ENCODE measurements at regions of chr1 and their contacts with region 1.

Region 1: DNA sequence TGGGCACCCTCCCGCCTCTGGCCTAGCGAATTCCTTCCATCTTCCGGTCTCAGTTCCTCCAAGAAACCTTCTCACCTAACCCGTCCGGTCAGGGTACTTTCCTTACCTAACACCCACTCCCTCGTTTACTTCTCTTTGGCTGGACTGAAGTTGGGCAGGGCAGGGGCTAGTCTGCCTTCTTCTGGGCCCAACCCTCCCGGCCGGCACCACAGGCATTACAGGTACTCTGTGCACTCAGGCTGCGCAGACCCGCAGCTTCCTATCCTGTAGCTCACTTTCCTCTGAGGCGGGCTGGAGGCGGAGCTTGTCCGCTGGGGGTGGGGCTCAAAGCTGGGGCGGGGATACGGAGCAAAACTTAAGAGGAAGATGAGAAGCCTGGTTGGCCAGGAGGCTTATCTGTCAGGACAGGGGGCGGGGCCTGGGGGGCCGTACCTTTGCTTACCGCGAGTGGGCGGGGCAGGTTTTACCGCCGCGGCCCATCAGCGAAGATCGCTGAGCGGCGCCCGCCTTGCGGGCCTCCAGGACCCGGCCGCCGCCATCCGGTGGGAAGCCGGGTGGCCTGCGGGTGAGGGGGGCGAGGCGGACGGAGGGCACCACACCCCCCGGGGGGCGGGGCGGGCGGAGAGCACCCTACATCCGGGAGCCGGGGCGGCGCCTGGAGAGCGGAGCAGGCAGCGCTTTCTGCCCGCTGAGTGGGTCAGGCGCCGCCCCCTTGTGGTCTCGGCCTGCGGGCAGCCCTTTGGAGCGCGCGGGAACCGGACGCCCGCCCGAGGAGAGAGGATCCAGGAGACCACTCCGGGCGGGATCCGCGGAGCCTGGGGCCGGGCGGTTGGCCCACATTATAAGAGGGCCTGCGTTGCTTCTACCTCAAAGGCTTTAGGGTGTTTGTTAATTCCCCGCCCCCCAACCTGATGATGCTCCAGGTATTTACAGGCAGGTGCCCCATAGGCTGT is 31.9 kb downstream of the ZNF648 start:
- DNase-seq: peak; percentile 96 to 99 (median 98)
- ATAC-seq: peak; percentile 93
- H3K4me3 ChIP-seq: peak overlapping the region; percentile 76 to 77
- H3K4me3 Mint-ChIP-seq: peak overlapping the region; percentile 93
- H3K27ac ChIP-seq: peak overlapping the region; percentile 68 to 84
- H3K27ac Mint-ChIP-seq: peak overlapping the region; percentile 98
- H3K4me1 ChIP-seq: peaks cover 16% of the 10 kb centered on the region
- H3K4me1 Mint-ChIP-seq: peaks cover 18% of the 10 kb centered on the region
- H3K27me3 ChIP-seq: no peaks in the 10 kb centered on the region
- H3K27me3 Mint-ChIP-seq: no peaks in the 10 kb centered on the region
- CTCF ChIP-seq: no peak

Region 2: DNA sequence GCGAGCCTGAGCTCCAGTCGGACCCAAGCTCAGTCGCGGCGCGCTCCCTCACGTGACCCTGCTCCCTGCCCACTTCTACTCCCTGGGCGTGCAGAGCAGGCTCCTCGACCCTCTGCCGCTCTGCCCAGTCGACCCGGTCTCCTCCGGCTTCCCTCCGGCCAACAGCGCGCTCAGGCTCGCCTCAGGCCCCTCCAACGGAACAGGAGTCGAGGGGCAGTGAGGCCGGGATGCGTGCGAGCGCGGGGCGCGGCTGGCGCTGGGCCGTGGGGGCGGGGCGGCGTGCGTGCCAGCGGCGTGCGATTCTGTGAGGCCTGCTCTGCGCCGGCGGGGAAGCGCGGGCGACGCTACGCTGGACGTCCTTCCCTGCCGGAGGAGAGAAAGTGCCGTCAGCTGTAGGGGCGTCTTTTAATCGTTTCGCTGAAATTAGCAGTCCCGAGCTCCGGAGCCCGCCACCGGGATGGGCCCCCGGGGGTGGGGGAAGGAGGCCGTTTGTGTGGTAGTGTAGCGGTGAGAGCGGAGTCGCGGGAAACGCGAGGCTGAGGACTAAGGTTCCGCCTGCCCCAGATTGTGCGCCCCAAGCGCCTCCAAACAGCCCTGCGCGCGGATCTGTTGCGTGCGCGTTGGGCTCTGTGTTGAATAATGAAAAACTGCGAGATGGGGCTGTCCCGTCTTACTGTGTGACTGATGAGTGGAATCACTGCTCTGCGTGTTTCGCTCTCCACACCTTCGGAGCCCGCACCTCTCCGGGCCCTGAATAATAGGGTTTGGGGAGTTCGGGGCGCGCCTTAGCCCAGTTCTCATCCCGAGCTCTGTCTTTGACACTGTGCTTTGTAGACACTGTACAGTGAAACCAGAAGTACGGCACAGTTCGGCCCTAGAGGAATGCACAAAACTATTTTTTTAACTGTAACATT is 1527.0 kb before region 1 on chr1 and contains the start of gene ACBD6:
- CTCF ChIA-PET with region 1: no interaction called
- POLR2A ChIA-PET with region 1: no interaction called
- intact Hi-C with region 1: loop called in 1 of 2 experiments (anchors 5 kb)
- DNase-seq: peak; percentile 73 to 92 (median 84)
- ATAC-seq: peak; percentile 89
- H3K4me3 ChIP-seq: peak within 1 kb of the TSS; percentile 96 to 97
- H3K4me3 Mint-ChIP-seq: peak within 1 kb of the TSS; percentile 96
- H3K27ac ChIP-seq: peak within 1 kb of the TSS; percentile 75 to 76
- H3K27ac Mint-ChIP-seq: peak within 1 kb of the TSS; percentile 98
- H3K4me1 ChIP-seq: peaks cover 27% of the 10 kb centered on the region
- H3K4me1 Mint-ChIP-seq: peaks cover 47% of the 10 kb centered on the region
- H3K27me3 ChIP-seq: no peaks in the 10 kb centered on the region
- H3K27me3 Mint-ChIP-seq: no peaks in the 10 kb centered on the region
- CTCF ChIP-seq: no peak
- total RNA-seq, gene ACBD6: 23.4 to 24.6 TPM

Region 3: DNA sequence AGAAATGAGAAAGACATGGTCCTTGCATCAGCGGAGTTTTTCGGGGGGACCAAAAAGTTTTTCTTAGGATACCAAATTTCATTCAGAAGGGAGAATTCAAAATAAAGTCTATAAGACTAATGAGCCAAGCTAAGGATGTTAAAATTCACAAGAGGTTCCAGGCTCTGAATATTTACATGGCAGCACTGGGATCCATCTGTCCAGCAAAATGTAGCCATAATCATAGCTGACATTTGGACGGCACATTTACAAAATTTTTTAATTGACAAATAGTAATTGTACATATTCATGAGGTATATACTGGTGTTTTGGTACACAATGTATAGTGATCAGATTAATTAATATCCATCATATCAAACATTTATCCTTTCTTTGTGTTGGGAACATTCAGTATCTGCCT is 76.1 kb before region 1 on chr1:
- CTCF ChIA-PET with region 1: no interaction called
- POLR2A ChIA-PET with region 1: no interaction called
- intact Hi-C with region 1: no loop called
- DNase-seq: no peak
- ATAC-seq: no peak
- H3K4me3 ChIP-seq: no peak overlapping the region
- H3K4me3 Mint-ChIP-seq: no peak overlapping the region
- H3K27ac ChIP-seq: no peak overlapping the region
- H3K27ac Mint-ChIP-seq: no peak overlapping the region
- H3K4me1 ChIP-seq: no peaks in the 10 kb centered on the region
- H3K4me1 Mint-ChIP-seq: no peaks in the 10 kb centered on the region
- H3K27me3 ChIP-seq: no peaks in the 10 kb centered on the region
- H3K27me3 Mint-ChIP-seq: no peaks in the 10 kb centered on the region
- CTCF ChIP-seq: no peak

Region 4: GRCh38 chr1:182015360-182015759 is 14.3 kb before region 1 on chr1:
- CTCF ChIA-PET with region 1: no interaction called
- POLR2A ChIA-PET with region 1: no interaction called
- intact Hi-C with region 1: no loop called
- DNase-seq: no peak
- ATAC-seq: no peak
- H3K4me3 ChIP-seq: no peak overlapping the region
- H3K4me3 Mint-ChIP-seq: no peak overlapping the region
- H3K27ac ChIP-seq: no peak overlapping the region
- H3K27ac Mint-ChIP-seq: no peak overlapping the region
- H3K4me1 ChIP-seq: no peaks in the 10 kb centered on the region
- H3K4me1 Mint-ChIP-seq: no peaks in the 10 kb centered on the region
- H3K27me3 ChIP-seq: no peaks in the 10 kb centered on the region
- H3K27me3 Mint-ChIP-seq: peaks cover 5% of the 10 kb centered on the region
- CTCF ChIP-seq: no peak

Region 5: GRCh38 chr1:182065126-182065845 is 35.6 kb after region 1 on chr1:
- CTCF ChIA-PET with region 1: no interaction called
- POLR2A ChIA-PET with region 1: no interaction called
- intact Hi-C with region 1: no loop called
- DNase-seq: no peak
- ATAC-seq: no peak
- H3K4me3 ChIP-seq: no peak overlapping the region
- H3K4me3 Mint-ChIP-seq: no peak overlapping the region
- H3K27ac ChIP-seq: no peak overlapping the region
- H3K27ac Mint-ChIP-seq: no peak overlapping the region
- H3K4me1 ChIP-seq: no peaks in the 10 kb centered on the region
- H3K4me1 Mint-ChIP-seq: peaks cover 3% of the 10 kb centered on the region
- H3K27me3 ChIP-seq: peaks cover 0 to 5% of the 10 kb centered on the region in 2 experiments
- H3K27me3 Mint-ChIP-seq: peaks cover 66% of the 10 kb centered on the region
- CTCF ChIP-seq: no peak

Region 6: GRCh38 chr1:182391362-182392044 is 361.8 kb after region 1 on chr1 and contains the start of gene GLUL:
- CTCF ChIA-PET with region 1: no interaction called
- POLR2A ChIA-PET with region 1: interaction called, 3 read pairs
- intact Hi-C with region 1: loop called in 1 of 2 experiments (anchors 2 kb)
- DNase-seq: peak; percentile 24 to 80 (median 55)
- ATAC-seq: peak; percentile 64
- H3K4me3 ChIP-seq: peak within 1 kb of the TSS; percentile 62 to 76
- H3K4me3 Mint-ChIP-seq: peak within 1 kb of the TSS; percentile 92
- H3K27ac ChIP-seq: peak within 1 kb of the TSS; percentile 32 to 36
- H3K27ac Mint-ChIP-seq: peak within 1 kb of the TSS; percentile 80
- H3K4me1 ChIP-seq: peaks cover 13% of the 10 kb centered on the region
- H3K4me1 Mint-ChIP-seq: peaks cover 25% of the 10 kb centered on the region
- H3K27me3 ChIP-seq: peaks cover 0 to 2% of the 10 kb centered on the region in 2 experiments
- H3K27me3 Mint-ChIP-seq: peaks cover 19% of the 10 kb centered on the region
- CTCF ChIP-seq: no peak
- total RNA-seq, gene GLUL: 27.3 to 29.7 TPM

Region 7: DNA sequence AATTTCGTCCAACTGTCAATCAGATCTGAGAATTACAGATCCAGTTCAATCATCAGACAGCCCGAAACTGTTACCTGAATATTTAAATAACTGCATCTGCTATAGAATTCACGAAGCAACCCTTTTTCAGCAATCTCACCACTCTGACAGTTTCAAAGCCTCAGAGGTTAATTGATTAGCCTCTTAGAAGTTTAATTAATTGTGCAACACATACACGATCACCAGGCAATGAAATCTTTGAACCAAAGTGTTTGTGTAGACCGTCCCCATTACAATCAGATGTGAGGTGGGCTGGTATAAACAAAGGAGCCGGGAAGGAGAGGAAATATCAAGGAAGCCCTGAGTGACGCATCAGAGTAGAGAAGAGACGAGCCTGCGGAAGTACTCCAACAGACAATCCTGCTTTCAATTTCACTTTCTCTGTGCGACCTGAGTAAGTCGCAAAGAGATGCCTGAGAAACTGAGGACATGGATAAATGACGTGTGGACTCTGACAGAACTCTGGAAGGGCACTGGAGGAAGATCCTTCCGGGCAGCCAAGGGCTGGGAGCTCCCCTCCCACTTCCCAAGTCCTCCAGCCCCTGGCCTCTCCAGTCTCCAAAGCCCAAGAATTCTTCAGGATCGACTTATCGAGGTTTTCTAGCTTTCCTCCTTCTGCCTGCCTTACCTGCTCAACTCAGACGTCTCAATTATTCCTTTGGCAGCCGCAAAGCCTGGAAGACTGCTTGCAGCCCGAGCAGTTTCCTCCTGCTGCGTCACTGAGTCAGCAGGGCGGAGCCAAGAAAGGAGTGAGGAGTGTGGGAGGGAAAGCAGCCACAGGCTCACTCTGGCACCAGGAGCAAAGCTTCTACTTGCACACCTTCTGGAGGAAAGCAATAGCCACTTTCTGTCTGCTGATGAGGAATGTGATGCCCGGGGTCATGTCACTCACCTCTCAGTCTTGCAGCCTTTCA is 559.1 kb after region 1 on chr1 and contains the start of gene RNASEL:
- CTCF ChIA-PET with region 1: no interaction called
- POLR2A ChIA-PET with region 1: no interaction called
- intact Hi-C with region 1: loop called (anchors 5 kb)
- DNase-seq: peak; percentile 24 to 87 (median 51)
- ATAC-seq: peak; percentile 92
- H3K4me3 ChIP-seq: peak within 1 kb of the TSS; percentile 78 to 95
- H3K4me3 Mint-ChIP-seq: peak within 1 kb of the TSS; percentile 94
- H3K27ac ChIP-seq: peak within 1 kb of the TSS; percentile 96 to 99
- H3K27ac Mint-ChIP-seq: peak within 1 kb of the TSS; percentile 99
- H3K4me1 ChIP-seq: peaks cover 44% of the 10 kb centered on the region
- H3K4me1 Mint-ChIP-seq: peaks cover 52% of the 10 kb centered on the region
- H3K27me3 ChIP-seq: no peaks in the 10 kb centered on the region
- H3K27me3 Mint-ChIP-seq: peaks cover 3% of the 10 kb centered on the region
- CTCF ChIP-seq: no peak
- total RNA-seq, gene RNASEL: 1.5 to 1.7 TPM

Region 8: DNA sequence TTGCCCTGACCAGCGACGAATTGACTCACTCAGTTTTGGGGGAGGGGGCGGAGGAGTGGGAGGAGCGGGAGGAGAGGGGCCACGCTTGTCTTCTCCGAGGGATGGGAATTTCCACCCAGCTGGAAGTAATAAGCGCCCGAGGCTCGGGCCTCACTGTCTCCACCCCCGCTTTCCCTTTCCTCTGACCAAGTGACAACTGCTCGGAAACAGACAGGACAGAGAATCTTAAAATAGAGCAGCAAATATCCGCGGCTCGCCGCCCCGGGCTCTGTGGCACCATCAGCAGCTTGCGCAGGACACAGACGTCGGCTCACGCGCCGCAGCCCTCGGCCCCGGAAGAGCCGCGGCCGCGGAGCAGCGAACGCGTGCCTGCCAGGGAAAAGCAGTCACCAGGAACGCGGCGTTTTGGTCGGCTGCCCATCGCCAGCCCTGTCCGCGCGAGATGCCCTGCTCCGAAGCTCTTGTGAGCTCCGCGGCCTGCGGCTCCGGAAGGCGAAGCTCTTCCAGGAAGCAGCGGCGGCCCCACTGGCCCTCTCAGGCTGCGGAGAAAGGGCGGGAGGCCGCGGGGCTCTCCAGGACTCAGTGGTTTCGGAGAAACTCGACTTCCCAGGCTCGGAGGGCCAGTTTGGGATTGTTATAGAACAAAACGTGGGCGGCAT is 585.3 kb after region 1 on chr1:
- CTCF ChIA-PET with region 1: no interaction called
- POLR2A ChIA-PET with region 1: no interaction called
- intact Hi-C with region 1: loop called in 1 of 2 experiments (anchors 10 kb)
- DNase-seq: peak in 6 of 9 experiments; percentile 12 to 70 (median 42)
- ATAC-seq: peak; percentile 3
- H3K4me3 ChIP-seq: peak overlapping the region; percentile 38 to 46
- H3K4me3 Mint-ChIP-seq: peak overlapping the region; percentile 73
- H3K27ac ChIP-seq: no peak overlapping the region
- H3K27ac Mint-ChIP-seq: peak overlapping the region; percentile 91
- H3K4me1 ChIP-seq: peaks cover 32% of the 10 kb centered on the region
- H3K4me1 Mint-ChIP-seq: peaks cover 30% of the 10 kb centered on the region
- H3K27me3 ChIP-seq: peaks cover 19 to 25% of the 10 kb centered on the region in 2 experiments
- H3K27me3 Mint-ChIP-seq: peaks cover 66% of the 10 kb centered on the region
- CTCF ChIP-seq: no peak

Region 9: DNA sequence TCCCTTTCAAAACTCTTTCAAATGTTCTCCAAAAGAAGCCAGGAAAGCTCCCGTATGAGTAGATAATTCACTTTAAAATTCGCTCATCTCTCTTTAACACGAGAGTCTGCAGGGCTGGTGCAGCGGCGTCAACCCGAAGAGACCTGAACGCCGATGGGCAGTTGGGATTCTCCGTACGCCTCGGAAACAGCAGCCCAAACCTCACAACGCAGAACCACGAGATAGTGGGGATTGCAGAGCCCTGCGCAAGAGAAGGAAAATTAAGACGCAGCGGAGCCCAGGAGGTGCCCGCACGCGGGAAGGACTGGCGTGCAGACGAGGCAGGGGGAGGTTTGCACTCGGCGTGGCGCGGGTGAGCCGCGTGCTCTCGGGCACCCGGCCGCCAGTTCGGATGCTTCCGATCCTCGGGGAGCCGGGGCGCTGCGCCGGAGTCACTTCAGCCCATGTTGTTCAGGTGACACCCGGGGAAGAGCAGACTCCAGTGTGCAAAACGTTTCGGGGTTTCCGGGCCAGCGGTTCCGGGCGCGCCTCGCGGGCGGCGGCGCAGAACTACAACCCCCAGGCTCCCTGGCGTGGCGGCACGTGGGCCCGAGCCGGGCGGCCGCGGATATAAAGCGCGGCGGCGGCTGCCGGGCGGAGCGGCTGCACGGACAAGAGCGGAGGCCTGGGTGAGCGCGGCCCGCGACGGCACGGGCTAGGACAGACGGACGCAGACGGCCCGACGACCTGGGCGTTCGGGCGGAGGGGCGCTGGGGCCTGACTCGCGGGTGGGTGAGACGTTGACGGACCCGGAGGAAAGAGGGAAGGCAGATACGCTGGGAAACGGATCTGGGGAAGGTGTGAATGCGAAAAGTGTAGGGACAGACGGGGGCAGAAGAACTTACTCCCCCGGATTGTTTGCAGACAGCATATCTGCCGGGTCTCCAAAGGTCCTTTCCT is 759.8 kb after region 1 on chr1 and contains the start of gene NPL:
- CTCF ChIA-PET with region 1: no interaction called
- POLR2A ChIA-PET with region 1: no interaction called
- intact Hi-C with region 1: loop called in 1 of 2 experiments (anchors 5 kb)
- DNase-seq: peak; percentile 65 to 92 (median 83)
- ATAC-seq: peak; percentile 96
- H3K4me3 ChIP-seq: peak within 1 kb of the TSS; percentile 69 to 75
- H3K4me3 Mint-ChIP-seq: peak within 1 kb of the TSS; percentile 91
- H3K27ac ChIP-seq: peak within 1 kb of the TSS; percentile 45 to 57
- H3K27ac Mint-ChIP-seq: peak within 1 kb of the TSS; percentile 76
- H3K4me1 ChIP-seq: peaks cover 12% of the 10 kb centered on the region
- H3K4me1 Mint-ChIP-seq: peaks cover 14% of the 10 kb centered on the region
- H3K27me3 ChIP-seq: no peaks in the 10 kb centered on the region
- H3K27me3 Mint-ChIP-seq: no peaks in the 10 kb centered on the region
- CTCF ChIP-seq: no peak
- total RNA-seq, gene NPL: 1.3 to 2.1 TPM

Region 10: GRCh38 chr1:182839209-182840065 is 809.8 kb after region 1 on chr1 and contains the start of gene DHX9:
- CTCF ChIA-PET with region 1: no interaction called
- POLR2A ChIA-PET with region 1: no interaction called
- intact Hi-C with region 1: loop called (anchors 1 to 5 kb)
- DNase-seq: peak; percentile 93 to 99 (median 96)
- ATAC-seq: peak; percentile 84
- H3K4me3 ChIP-seq: peak within 1 kb of the TSS; percentile 69 to 87
- H3K4me3 Mint-ChIP-seq: peak within 1 kb of the TSS; percentile 95
- H3K27ac ChIP-seq: peak within 1 kb of the TSS; percentile 66 to 86
- H3K27ac Mint-ChIP-seq: peak within 1 kb of the TSS; percentile 98
- H3K4me1 ChIP-seq: peaks cover 36% of the 10 kb centered on the region
- H3K4me1 Mint-ChIP-seq: peaks cover 49% of the 10 kb centered on the region
- H3K27me3 ChIP-seq: no peaks in the 10 kb centered on the region
- H3K27me3 Mint-ChIP-seq: no peaks in the 10 kb centered on the region
- CTCF ChIP-seq: peak; percentile 28
- total RNA-seq, gene DHX9: 374 to 382 TPM

Measured in CD8-positive, alpha-beta T cell (primary cell).